Activated naive CD8-positive, alpha-beta T cell treated with anti-CD3 and anti-CD28 coated beads, Interleukin-2, amount 10 ng/mL, durations not matched to agents 7 days and 5 days (primary cell): ENCODE measurements at regions of chr16 and their contacts with region 1.

Region 1: DNA sequence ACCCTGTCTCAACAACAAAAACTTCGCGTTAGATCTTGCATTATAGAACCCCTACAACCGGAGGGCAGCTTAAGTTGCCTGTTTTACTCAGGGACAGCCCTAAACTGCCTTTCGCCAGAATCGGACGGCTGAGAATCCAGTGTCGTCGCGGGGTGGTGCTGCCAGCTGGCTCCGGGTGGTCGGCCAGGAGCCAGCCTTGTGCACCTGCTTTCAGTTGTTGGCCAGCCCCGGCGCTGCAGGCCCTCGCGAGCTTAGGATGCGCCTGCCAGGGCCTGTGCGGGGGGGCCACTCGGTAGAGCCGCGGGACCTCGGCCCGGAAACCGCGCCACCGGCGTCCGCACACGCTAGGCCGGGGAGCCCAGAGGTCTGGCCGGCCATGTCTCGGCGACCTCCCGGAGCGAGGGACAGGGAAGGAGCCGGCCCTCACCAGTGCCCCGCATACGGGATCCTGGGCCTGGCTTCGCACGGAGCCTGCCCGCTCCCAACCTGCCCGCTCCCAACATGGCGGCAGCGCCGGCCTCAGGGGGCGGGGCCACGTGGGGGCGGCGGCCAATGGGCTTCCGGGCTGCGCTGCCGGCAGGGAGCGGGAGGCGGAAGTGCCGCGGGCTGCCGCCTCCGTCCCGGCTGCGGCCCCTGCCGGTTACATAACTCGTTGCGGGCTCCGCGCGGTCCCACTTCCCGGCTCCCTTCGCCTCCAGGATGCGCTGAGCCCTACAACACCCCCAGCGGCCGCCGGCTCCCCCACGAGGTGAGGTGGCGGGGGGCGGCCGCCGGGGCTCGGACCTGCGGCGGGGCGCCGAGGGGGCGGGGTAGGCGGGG is 14.2 kb downstream of the NAA60 start:
- DNase-seq: peak; percentile 98
- ATAC-seq: peak; percentile 88
- H3K4me3 Mint-ChIP-seq: peak overlapping the region; percentile 84
- H3K27ac Mint-ChIP-seq: peak overlapping the region; percentile 87
- H3K4me1 Mint-ChIP-seq: peaks cover 39% of the 10 kb centered on the region
- H3K27me3 Mint-ChIP-seq: no peaks in the 10 kb centered on the region

Region 2: GRCh38 chr16:3158471-3159314 is 298.9 kb before region 1 on chr16:
- POLR2A ChIA-PET with region 1: interaction called, 10 read pairs
- DNase-seq: peak; percentile 90
- ATAC-seq: peak; percentile 82
- H3K4me3 Mint-ChIP-seq: peak overlapping the region; percentile 84
- H3K27ac Mint-ChIP-seq: peak overlapping the region; percentile 92
- H3K4me1 Mint-ChIP-seq: peaks cover 30% of the 10 kb centered on the region
- H3K27me3 Mint-ChIP-seq: peaks cover 11% of the 10 kb centered on the region

Region 3: DNA sequence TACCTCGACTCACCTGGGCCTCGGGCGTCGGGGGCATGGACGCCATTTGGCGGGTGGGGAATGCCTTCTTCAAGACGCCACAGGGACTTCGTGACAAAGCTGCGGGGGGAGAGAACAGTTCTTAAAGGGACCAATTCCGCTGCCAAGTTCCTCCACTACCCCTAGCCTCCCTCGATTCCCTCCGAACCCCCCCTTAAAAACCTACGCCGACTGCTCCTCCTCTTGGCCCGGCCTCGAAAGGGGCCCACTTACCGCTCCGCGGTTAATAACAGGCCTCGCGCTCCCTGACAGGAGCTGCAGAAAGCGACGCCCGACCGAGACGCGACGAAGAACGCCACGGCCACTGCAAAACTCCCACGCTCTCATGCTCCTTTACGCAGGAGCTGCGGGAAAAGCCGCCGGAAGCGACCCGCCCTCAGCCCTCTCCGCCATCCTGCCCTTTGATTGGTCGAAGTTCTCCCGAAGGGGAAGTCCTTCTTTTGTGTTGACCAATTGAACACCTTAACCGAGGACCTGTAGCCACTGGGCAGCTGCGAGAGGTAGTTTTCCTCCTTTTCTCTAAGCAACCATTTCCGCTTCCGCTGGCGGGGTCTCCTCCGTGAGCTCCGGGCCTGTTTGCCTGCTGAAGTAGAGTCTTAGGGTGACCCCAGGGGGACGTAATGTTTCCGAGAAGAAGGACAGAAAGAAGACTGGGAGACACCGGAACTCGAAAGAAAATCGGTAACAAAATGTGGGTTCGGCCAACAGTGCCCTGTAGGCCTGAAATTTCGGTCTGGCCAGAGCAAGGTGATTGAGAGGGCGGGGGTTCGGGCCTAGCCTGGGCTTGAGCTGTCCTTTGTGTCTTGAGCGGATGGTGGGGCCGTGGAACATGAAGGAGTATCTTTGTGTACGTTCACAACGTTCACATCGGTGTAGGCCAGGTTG is 14.3 kb before region 1 on chr16 and contains the starts of genes NAA60 and ZNF597:
- POLR2A ChIA-PET with region 1: interaction called, 11 read pairs
- DNase-seq: peak; percentile 65
- ATAC-seq: peak; percentile 91
- H3K4me3 Mint-ChIP-seq: peak within 1 kb of the TSS; percentile 94
- H3K27ac Mint-ChIP-seq: peak within 1 kb of the TSS; percentile 89
- H3K4me1 Mint-ChIP-seq: peaks cover 16% of the 10 kb centered on the region
- H3K27me3 Mint-ChIP-seq: no peaks in the 10 kb centered on the region
- total RNA-seq, gene NAA60: 54.0 to 54.6 TPM
- total RNA-seq, gene ZNF597: 3.6 to 4.2 TPM